HepG2 (cell line): ENCODE measurements at regions of chr1 and their contacts with region 1.

Region 1: DNA sequence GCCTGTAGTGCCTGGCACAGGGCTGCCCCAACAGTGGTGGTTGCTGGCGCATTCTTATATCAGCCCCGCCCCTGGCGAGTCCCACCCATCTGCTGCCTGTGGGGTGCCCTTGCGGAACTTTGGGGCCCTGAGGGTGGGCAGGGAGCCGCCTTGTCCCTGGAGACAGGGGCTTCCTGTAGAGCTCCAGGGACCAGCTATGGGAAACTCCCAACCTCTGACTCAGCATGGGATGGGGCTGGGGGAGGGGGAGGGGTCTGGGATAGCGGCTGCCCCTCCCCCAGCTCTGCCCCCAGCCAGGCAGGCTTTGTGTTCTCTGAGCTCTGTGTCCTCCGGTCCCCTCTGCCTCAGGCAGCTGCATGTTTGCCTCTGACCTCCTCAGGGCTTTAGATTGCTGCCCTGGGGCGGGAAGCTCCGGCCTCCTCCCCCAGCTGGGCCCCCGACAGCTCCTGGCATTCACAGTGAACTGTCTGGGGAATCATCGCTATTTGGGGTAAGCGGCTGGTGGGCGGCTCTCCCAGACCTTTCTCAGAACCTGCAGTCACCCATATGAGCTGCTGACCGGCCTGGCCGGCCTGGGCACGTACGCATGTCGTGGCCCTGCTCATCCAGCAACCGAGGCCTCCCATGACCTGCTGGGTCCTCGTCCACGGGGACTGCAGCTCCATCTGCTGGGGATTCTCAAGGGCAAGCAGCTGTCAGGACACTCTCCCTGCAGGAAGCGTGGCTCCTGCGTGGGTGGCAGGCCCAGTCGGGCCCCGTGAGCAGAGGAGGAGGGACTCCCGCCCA is 17.0 kb downstream of the ARHGEF16 start:
- DNase-seq: peak; percentile 89
- ATAC-seq: peak; percentile 80
- H3K4me3 ChIP-seq: peak overlapping the region in 2 of 3 experiments; percentile 9 to 62; a peak in 4 of 6 replicates
- H3K27ac ChIP-seq: peak overlapping the region; percentile 96
- H3K4me1 ChIP-seq: peaks cover 26% of the 10 kb centered on the region
- H3K27me3 ChIP-seq: no peaks in the 10 kb centered on the region
- CTCF ChIP-seq: peak; percentile 96
- EP300 ChIP-seq: peak in 1 of 2 experiments; percentile 80; a peak in 2 of 4 replicates
- POLR2A ChIP-seq: peak in 1 of 2 experiments; percentile 56; a peak in 2 of 4 replicates
- RAD21 ChIP-seq: peak; percentile 94

Region 2: GRCh38 chr1:3453203-3453761 is 18.2 kb before region 1 on chr1:
- CTCF ChIA-PET with region 1: interaction called, 57 read pairs
- POLR2A ChIA-PET with region 1: interaction called, 282 read pairs
- in situ Hi-C with region 1: no loop called
- intact Hi-C with region 1: loop called (anchors 1 kb)
- DNase-seq: peak; percentile 69
- ATAC-seq: peak; percentile 22
- H3K4me3 ChIP-seq: peak overlapping the region in 1 of 3 experiments; percentile 79; a peak in 1 of 6 replicates
- H3K27ac ChIP-seq: peak overlapping the region; percentile 98
- H3K4me1 ChIP-seq: peaks cover 74% of the 10 kb centered on the region
- H3K27me3 ChIP-seq: no peaks in the 10 kb centered on the region
- CTCF ChIP-seq: peak; percentile 98
- EP300 ChIP-seq: no peak
- POLR2A ChIP-seq: no peak
- RAD21 ChIP-seq: peak; percentile 99

Region 3: DNA sequence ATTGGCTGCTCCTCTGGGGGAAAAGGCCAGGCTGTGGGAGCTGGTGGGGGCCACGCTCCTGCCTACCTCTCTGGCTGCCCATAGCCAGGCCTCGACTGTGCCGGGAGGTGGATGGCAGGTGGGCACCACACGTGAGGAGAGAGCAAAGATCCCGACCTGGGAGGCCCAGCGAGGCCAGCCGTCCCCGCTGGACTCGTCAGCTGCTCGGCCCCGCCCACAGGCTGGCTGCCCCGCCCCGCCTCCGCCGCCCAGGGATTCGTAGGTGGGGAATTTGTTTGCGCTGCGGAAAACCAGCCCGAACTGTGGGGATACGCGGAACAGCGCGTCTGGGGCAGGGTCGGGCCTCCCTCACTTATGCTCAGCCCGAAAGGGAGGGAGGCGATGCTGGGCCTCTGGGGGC is 212.5 kb after region 1 on chr1:
- CTCF ChIA-PET with region 1: no interaction called
- POLR2A ChIA-PET with region 1: no interaction called
- in situ Hi-C with region 1: no loop called
- intact Hi-C with region 1: no loop called
- DNase-seq: no peak
- ATAC-seq: no peak
- H3K4me3 ChIP-seq: no peak overlapping the region
- H3K27ac ChIP-seq: no peak overlapping the region
- H3K4me1 ChIP-seq: no peaks in the 10 kb centered on the region
- H3K27me3 ChIP-seq: no peaks in the 10 kb centered on the region; a peak in 1 of 5 replicates
- CTCF ChIP-seq: no peak
- EP300 ChIP-seq: no peak
- POLR2A ChIP-seq: no peak
- RAD21 ChIP-seq: no peak